ENCODE measurements at regions of chr1 and their contacts with region 1.

Region 1: GRCh38 chr1:19643602-19644394 is at the start of gene NBL1:
- DNase-seq: no peak
- total RNA-seq, gene NBL1: 15.8 and 26.2 TPM in 2 replicates

Region 2: DNA sequence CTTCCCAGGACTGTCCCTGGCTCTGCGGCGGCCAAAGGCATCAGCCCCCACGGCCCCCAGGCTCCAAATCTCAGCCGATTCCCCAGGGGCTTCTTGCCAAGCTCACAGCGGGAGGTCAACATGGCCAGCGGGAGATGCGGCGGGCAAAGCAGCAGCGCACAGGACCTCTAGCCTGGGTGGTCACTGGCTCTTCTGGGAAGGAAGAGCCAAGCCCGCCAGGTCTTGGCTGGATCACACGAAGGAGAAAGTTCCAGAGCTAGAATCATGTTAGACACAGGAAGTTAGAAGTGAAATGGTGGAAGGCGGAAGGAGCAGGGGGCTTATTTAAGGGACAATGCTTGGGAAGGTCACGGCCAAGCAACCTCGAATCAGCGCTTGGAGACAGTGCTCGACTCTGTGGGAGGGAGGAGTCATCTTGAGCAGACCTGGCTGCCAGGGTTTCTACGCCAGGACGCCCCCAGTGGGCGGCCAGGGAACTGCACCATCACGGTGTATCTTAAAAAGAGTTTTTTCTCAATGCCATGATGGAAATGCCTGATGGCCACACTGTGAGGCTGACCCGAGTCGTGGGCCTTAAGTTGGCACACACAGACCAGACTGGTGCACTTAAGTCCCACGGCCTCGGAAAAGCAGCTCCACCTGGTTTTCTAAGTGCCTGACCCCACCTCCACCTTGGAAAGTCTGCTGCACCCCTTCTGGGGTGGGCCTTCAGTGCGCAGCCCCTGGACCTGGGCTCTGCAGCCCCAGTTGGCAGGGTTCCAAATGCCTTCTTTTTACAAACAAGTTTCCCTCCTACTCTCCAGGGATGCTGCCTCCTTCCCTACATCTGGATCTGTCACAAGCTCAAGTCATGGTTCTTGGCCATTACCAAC is 302.4 kb before region 1 on chr1:
- in situ Hi-C with region 1: loop called (anchors 25 kb)
- DNase-seq: peak; percentile 81

Region 3: GRCh38 chr1:19596714-19597495 is 46.9 kb before region 1 on chr1:
- in situ Hi-C with region 1: no loop called
- DNase-seq: peak; percentile 99

Measured in G401 (cell line).